ENCODE measurements at regions of chr6 and their contacts with region 1.

Region 1: GRCh38 chr6:26097268-26097875 is 10.1 kb downstream of the HFE start:
- DNase-seq: peak; percentile 15 to 65
- ATAC-seq: peak; percentile 91 to 92
- H3K4me3 ChIP-seq: no peak overlapping the region
- H3K27ac ChIP-seq: peak overlapping the region; percentile 13 to 73; a peak in 4 of 6 replicates
- H3K4me1 ChIP-seq: peaks cover 10% of the 10 kb centered on the region
- CTCF ChIP-seq: peak; percentile 82
- EP300 ChIP-seq: no peak
- POLR2A ChIP-seq: no peak
- RAD21 ChIP-seq: peak; percentile 77 to 85

Region 2: GRCh38 chr6:26045065-26045927 is 52.1 kb before region 1 on chr6:
- CTCF ChIA-PET with region 1: interaction called, 10 read pairs
- POLR2A ChIA-PET with region 1: no interaction called
- DNase-seq: peak; percentile 55 to 86
- ATAC-seq: peak; percentile 67 to 77
- H3K4me3 ChIP-seq: peak overlapping the region; percentile 40
- H3K27ac ChIP-seq: peak overlapping the region; percentile 81 to 89
- H3K4me1 ChIP-seq: 0 out of 3 replicates have a peak, but pooled peaks cover 11% of the 10 kb centered on the region
- CTCF ChIP-seq: no peak
- EP300 ChIP-seq: no peak
- POLR2A ChIP-seq: peak; percentile 83
- RAD21 ChIP-seq: no peak

Region 3: GRCh38 chr6:26524722-26525370 is 427.5 kb after region 1 on chr6:
- CTCF ChIA-PET with region 1: no interaction called
- POLR2A ChIA-PET with region 1: no interaction called
- DNase-seq: no peak
- ATAC-seq: no peak
- H3K4me3 ChIP-seq: no peak overlapping the region
- H3K27ac ChIP-seq: no peak overlapping the region
- H3K4me1 ChIP-seq: peaks cover 21% of the 10 kb centered on the region
- CTCF ChIP-seq: no peak
- EP300 ChIP-seq: no peak
- POLR2A ChIP-seq: no peak
- RAD21 ChIP-seq: no peak

Measured in A549 (cell line).